ENCODE measurements at regions of chr5 and their contacts with region 1.

Region 1: GRCh38 chr5:36079200-36079761 is 12.6 kb upstream of the UGT3A2 start:
- DNase-seq: peak; percentile 45
- H3K4me3 Mint-ChIP-seq: no peak overlapping the region
- H3K27ac Mint-ChIP-seq: no peak overlapping the region
- H3K4me1 Mint-ChIP-seq: no peaks in the 10 kb centered on the region
- H3K27me3 Mint-ChIP-seq: peaks cover 28% of the 10 kb centered on the region

Region 2: DNA sequence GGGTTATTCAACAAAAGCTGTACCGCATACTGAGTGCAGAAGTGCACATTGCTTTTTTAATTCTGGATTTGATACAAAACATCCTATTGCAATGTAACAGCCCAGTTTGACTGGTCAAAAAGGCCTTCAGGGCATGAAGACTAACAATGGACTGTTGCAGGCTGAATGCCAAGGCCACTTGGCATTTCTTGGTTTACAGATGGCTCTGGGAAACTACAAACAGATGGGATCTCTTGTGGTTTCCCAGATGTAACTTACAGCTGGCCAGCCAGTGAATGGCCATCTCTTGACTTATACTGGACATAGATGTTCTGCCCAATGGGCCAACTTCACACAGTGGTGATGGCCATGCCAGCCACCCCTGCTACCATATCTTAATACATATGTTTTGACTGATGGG is 49.4 kb before region 1 on chr5:
- CTCF ChIA-PET with region 1: no interaction called
- DNase-seq: no peak
- H3K4me3 Mint-ChIP-seq: no peak overlapping the region
- H3K27ac Mint-ChIP-seq: no peak overlapping the region
- H3K4me1 Mint-ChIP-seq: no peaks in the 10 kb centered on the region
- H3K27me3 Mint-ChIP-seq: no peaks in the 10 kb centered on the region

Region 3: DNA sequence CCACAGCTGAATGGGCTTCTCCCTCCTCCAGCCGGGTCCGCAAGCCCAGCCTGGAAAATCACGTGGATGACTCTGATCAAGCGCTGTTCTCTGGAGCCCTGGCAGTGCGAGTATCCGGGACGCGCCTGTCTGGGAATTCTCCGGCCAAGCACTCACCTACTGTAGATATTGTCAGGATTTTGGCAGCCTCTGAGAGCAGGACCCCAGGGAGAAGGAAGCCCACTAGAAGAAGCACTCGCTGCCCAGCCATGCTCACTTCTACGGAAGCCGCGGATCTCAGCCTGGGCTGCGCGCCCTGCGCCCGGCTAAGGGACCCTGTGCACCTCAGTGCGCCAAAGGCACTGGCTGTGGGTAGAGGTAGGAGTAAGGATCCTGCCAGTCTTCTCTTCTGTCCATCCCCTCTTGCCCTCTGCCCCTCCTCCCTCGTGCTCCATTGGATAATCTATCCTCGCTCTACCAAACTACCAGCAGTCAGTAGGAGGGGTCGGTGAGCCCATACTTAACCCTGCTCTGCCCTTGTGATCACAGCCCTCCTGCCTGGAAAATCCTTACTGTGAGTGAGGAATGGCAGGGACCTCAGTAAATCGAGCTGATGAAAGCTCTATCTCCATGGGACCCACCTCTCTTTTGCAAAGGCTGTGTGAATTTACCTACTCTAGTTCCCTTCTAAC is 12.6 kb before region 1 on chr5 and contains the start of gene UGT3A2:
- CTCF ChIA-PET with region 1: interaction called, 11 read pairs
- DNase-seq: no peak
- H3K4me3 Mint-ChIP-seq: no peak within 1 kb of the TSS
- H3K27ac Mint-ChIP-seq: no peak within 1 kb of the TSS
- H3K4me1 Mint-ChIP-seq: peaks cover 10% of the 10 kb centered on the region
- H3K27me3 Mint-ChIP-seq: peaks cover 52% of the 10 kb centered on the region

Region 4: GRCh38 chr5:36089989-36090564 is 10.8 kb after region 1 on chr5:
- CTCF ChIA-PET with region 1: interaction called, 14 read pairs
- DNase-seq: peak; percentile 35
- H3K4me3 Mint-ChIP-seq: no peak overlapping the region
- H3K27ac Mint-ChIP-seq: no peak overlapping the region
- H3K4me1 Mint-ChIP-seq: no peaks in the 10 kb centered on the region
- H3K27me3 Mint-ChIP-seq: peaks cover 4% of the 10 kb centered on the region

Region 5: DNA sequence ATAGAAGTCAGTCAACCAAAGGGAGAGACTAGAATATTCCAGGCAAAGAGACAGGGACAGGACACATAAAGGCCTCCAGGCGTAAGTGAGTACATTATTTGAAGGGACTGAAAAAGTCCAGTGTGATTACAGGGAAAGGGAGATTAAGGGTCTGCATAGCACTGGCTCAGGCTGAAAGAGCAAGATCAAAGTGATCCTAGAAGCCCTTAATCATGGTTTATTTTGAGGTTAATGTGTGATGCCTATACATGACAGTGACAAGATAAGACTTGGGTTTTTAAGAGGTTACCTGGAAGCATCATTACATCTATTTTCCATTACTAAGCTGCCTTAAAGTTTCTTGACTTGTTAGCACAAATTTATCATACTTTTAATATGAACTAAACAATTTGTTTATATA is 46.6 kb after region 1 on chr5:
- CTCF ChIA-PET with region 1: no interaction called
- DNase-seq: no peak
- H3K4me3 Mint-ChIP-seq: no peak overlapping the region
- H3K27ac Mint-ChIP-seq: no peak overlapping the region
- H3K4me1 Mint-ChIP-seq: no peaks in the 10 kb centered on the region
- H3K27me3 Mint-ChIP-seq: no peaks in the 10 kb centered on the region

Region 6: GRCh38 chr5:36241631-36242533 is 162.6 kb after region 1 on chr5 and contains the start of gene NADK2:
- CTCF ChIA-PET with region 1: interaction called, 11 read pairs
- DNase-seq: peak; percentile 95
- H3K4me3 Mint-ChIP-seq: peak within 1 kb of the TSS; percentile 81
- H3K27ac Mint-ChIP-seq: peak within 1 kb of the TSS; percentile 92
- H3K4me1 Mint-ChIP-seq: peaks cover 31% of the 10 kb centered on the region
- H3K27me3 Mint-ChIP-seq: no peaks in the 10 kb centered on the region

Region 7: GRCh38 chr5:36507332-36507952 is 428.2 kb after region 1 on chr5:
- CTCF ChIA-PET with region 1: interaction called, 19 read pairs
- DNase-seq: peak; percentile 80
- H3K4me3 Mint-ChIP-seq: no peak overlapping the region
- H3K27ac Mint-ChIP-seq: no peak overlapping the region
- H3K4me1 Mint-ChIP-seq: peaks cover 4% of the 10 kb centered on the region
- H3K27me3 Mint-ChIP-seq: peaks cover 15% of the 10 kb centered on the region

Measured in activated naive CD4-positive, alpha-beta T cell treated with anti-CD3 and anti-CD28 coated beads, Interleukin-2, amount 10 ng/mL, durations not matched to agents 7 days and 5 days (primary cell).